GM12878 (cell line): ENCODE measurements at regions of chr12 and their contacts with region 1.

Region 1: GRCh38 chr12:131239384-131240094 is 285.8 kb downstream of the ADGRD1 start:
- DNase-seq: peak; percentile 58
- ATAC-seq: peak; percentile 91
- H3K4me3 ChIP-seq: no peak overlapping the region
- H3K27ac ChIP-seq: peak overlapping the region; percentile 55
- H3K4me1 ChIP-seq: peaks cover 4% of the 10 kb centered on the region; the same call in 1 of the 2 replicates
- H3K27me3 ChIP-seq: no peaks in the 10 kb centered on the region
- CTCF ChIP-seq: no peak
- EP300 ChIP-seq: no peak
- POLR2A ChIP-seq: no peak
- RAD21 ChIP-seq: no peak

Region 2: DNA sequence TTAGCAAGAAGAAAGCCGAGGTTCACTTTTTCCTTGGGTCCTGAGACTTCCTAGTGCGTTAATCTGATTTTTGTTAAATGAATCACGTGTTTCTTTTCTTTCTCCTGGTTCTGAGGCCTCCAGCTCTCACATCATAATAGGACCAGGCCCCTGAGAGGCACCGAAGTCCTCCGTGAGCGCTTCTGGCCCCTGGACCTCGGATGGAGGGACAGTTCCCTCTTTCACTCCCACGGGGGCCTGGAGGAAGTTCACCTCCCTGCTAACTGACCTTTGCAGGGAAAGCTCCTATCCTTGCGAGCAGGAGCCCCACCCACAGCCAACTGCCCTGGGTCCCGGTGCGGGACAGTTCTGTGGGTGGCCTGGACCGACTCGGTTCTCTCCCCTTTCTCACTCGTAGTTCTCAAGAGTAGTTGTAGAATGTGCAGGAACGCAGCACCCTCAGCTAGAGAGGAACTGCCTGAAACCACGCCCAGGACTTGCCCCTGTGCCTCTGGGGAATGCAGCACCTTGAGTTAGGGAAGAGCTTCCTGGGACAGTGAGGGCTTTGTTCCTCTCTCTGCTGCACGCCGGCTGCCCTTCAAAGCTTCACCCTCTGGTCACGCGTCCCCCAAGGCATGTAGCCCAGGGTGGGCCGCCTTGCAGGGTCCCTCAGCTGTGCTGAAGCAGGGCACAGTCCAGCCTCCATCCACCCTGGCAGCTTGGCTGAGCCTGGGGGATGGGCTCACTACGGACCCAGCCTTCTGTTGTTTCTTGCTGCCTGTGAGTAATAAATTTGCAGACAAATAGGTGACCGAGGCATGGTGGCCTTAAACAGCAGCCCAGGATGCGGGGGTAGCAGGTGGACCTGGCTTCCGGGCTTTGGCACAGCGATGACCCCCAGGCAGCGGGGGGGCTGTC is 21.3 kb before region 1 on chr12:
- CTCF ChIA-PET with region 1: interaction called, 4 read pairs
- POLR2A ChIA-PET with region 1: interaction called, 7 read pairs
- RAD21 ChIA-PET with region 1: interaction called, 18 read pairs
- SMC1A ChIA-PET with region 1: interaction called, 5 read pairs
- in situ Hi-C with region 1: no loop called
- intact Hi-C with region 1: loop called (anchors 2 kb)
- DNase-seq: no peak
- ATAC-seq: peak; percentile 60
- H3K4me3 ChIP-seq: no peak overlapping the region
- H3K27ac ChIP-seq: peak overlapping the region; percentile 39; the same call in 1 of the 2 replicates
- H3K4me1 ChIP-seq: peaks cover 34% of the 10 kb centered on the region
- H3K27me3 ChIP-seq: no peaks in the 10 kb centered on the region
- CTCF ChIP-seq: no peak
- EP300 ChIP-seq: no peak
- POLR2A ChIP-seq: no peak
- RAD21 ChIP-seq: no peak